Psoas muscle (tissue), 8 donors: ENCODE measurements at regions of chr7 and their contacts with region 1.

Region 1: GRCh38 chr7:28626624-28627262 is 214.4 kb downstream of the CREB5 start:
- DNase-seq: no peak
- ATAC-seq: no peak
- H3K4me3 ChIP-seq: no peak overlapping the region
- H3K27ac ChIP-seq: peak overlapping the region; percentile 48
- H3K4me1 ChIP-seq: peaks cover 49% of the 10 kb centered on the region
- H3K27me3 ChIP-seq: no peaks in the 10 kb centered on the region
- CTCF ChIP-seq: peak; percentile 66

Region 2: GRCh38 chr7:28389504-28390395 is 237.0 kb before region 1 on chr7:
- intact Hi-C with region 1: loop called (anchors 5 kb)
- DNase-seq: no peak
- ATAC-seq: peak in 3 of 4 donors; percentile 37 to 82 (median 66)
- H3K4me3 ChIP-seq: peak overlapping the region; percentile 56
- H3K27ac ChIP-seq: no peak overlapping the region
- H3K4me1 ChIP-seq: no peaks in the 10 kb centered on the region
- H3K27me3 ChIP-seq: no peaks in the 10 kb centered on the region
- CTCF ChIP-seq: peak; percentile 89